Natural killer cell (primary cell): ENCODE measurements at regions of chr9 and their contacts with region 1.

Region 1: DNA sequence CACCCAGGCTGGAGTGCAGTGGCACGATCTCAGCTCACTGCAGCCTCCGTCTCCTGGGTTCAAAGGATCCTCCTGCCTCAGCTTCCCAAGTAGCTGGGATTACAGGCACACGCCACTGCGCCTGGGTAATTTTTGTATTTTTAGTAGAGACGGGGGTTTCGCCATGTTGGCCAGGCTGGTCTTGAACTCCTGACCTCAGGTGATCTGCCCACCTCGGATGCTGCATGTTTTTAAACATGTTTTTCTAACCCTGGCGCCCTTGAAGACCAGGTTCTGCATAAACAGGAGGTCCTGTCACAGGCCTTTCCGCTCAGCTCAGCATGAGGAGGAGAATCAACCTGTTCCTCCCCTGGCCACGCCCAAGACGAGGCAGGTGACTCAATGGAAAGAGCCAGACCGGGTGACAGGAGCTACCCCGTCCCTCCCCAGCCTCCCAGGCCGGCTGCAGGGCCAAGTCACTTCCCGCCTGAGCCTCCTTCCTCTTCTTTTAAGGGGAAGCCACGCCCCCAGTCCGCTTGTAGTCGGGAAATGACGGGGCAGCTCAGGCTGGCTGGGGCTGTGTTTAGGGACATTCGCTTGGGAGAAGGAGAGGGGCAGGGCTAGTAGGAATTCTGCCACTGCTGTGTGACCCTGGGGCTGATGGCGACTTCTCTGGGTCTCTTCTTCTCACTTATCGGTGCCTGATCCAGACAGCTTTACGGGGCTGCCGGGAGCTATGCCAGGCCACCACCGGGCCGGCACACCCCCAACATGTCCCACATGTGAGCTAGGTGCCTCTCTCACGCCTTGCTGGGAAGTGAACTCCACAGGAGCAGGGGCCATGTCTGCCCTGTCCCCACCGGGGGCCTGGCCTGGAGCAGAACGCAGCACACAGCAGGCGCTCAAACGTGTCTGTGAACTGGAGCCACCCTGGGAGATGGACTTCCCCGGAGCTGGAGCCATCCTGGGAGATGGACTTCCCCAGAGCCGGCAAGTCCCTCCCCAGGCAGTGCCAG is 6.1 kb downstream of the NOTCH1 start:
- DNase-seq: peak; percentile 64 to 89
- ATAC-seq: peak; percentile 30 to 69 (median 50)
- H3K4me3 ChIP-seq: peak overlapping the region; percentile 9
- H3K4me3 Mint-ChIP-seq: peak overlapping the region; percentile 98
- H3K27ac ChIP-seq: peak overlapping the region; percentile 87
- H3K27ac Mint-ChIP-seq: peak overlapping the region; percentile 89 to 99
- H3K4me1 ChIP-seq: peaks cover 97% of the 10 kb centered on the region
- H3K4me1 Mint-ChIP-seq: peaks cover 49 to 53% of the 10 kb centered on the region in 2 donors
- H3K27me3 ChIP-seq: no peaks in the 10 kb centered on the region
- H3K27me3 Mint-ChIP-seq: no peaks in the 10 kb centered on the region
- CTCF ChIP-seq: no peak

Region 2: GRCh38 chr9:136558373-136558772 is 18.6 kb after region 1 on chr9:
- intact Hi-C with region 1: no loop called
- DNase-seq: no peak
- ATAC-seq: peak in 1 of 3 donors; percentile 68
- H3K4me3 ChIP-seq: no peak overlapping the region
- H3K4me3 Mint-ChIP-seq: peak overlapping the region; percentile 30
- H3K27ac ChIP-seq: peak overlapping the region; percentile 38
- H3K27ac Mint-ChIP-seq: peak overlapping the region; percentile 7 to 66
- H3K4me1 ChIP-seq: peaks cover 41% of the 10 kb centered on the region
- H3K4me1 Mint-ChIP-seq: peaks cover 8 to 15% of the 10 kb centered on the region in 2 donors
- H3K27me3 ChIP-seq: no peaks in the 10 kb centered on the region
- H3K27me3 Mint-ChIP-seq: no peaks in the 10 kb centered on the region
- CTCF ChIP-seq: no peak

Region 3: DNA sequence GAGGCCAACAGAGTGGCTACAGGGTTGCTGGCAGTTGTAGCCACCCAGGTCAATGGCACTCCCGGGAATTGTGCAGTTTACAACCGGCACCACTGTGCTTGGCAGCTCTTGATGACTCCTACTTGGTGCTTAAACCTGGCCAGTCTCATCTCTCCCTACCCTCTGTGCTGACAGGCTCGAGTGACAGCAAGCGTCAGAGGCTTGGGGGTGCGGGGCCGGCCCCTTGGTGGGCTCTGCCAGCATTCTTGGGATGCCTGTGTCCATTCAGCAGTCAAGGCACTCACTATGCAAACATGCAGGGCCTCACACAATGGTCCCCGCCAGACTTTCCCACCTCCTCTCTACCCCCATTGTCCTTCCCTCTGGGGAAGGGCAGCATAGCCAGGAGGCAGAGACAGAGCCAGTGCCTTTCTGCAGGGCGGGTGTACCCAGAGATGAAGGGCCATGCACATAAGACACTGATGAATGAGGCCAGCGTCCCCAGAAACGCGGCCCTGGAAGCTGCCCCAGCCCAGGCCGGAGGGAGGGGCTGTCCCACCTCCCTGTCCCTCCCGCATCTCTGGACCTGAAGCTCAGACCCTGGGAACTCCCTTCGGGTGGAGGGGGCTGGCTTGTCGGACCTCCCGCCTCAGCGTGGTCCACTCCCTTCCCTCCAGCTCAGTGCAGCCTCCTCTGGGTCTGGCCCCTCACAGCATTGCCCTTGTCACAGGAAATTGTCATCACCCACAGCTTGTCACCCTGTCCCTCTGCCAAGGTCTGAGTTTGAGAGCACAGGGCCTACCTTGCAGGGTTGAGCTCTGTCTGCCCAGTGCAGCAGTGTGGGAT is 32.5 kb after region 1 on chr9:
- intact Hi-C with region 1: loop called (anchors 5 kb)
- DNase-seq: peak; percentile 53 to 55
- ATAC-seq: peak; percentile 92 to 94 (median 94)
- H3K4me3 ChIP-seq: no peak overlapping the region
- H3K4me3 Mint-ChIP-seq: peak overlapping the region; percentile 72
- H3K27ac ChIP-seq: peak overlapping the region; percentile 73
- H3K27ac Mint-ChIP-seq: peak overlapping the region; percentile 90 to 93
- H3K4me1 ChIP-seq: peaks cover 97% of the 10 kb centered on the region
- H3K4me1 Mint-ChIP-seq: peaks cover 47 to 59% of the 10 kb centered on the region in 2 donors
- H3K27me3 ChIP-seq: no peaks in the 10 kb centered on the region
- H3K27me3 Mint-ChIP-seq: no peaks in the 10 kb centered on the region
- CTCF ChIP-seq: no peak

Region 4: DNA sequence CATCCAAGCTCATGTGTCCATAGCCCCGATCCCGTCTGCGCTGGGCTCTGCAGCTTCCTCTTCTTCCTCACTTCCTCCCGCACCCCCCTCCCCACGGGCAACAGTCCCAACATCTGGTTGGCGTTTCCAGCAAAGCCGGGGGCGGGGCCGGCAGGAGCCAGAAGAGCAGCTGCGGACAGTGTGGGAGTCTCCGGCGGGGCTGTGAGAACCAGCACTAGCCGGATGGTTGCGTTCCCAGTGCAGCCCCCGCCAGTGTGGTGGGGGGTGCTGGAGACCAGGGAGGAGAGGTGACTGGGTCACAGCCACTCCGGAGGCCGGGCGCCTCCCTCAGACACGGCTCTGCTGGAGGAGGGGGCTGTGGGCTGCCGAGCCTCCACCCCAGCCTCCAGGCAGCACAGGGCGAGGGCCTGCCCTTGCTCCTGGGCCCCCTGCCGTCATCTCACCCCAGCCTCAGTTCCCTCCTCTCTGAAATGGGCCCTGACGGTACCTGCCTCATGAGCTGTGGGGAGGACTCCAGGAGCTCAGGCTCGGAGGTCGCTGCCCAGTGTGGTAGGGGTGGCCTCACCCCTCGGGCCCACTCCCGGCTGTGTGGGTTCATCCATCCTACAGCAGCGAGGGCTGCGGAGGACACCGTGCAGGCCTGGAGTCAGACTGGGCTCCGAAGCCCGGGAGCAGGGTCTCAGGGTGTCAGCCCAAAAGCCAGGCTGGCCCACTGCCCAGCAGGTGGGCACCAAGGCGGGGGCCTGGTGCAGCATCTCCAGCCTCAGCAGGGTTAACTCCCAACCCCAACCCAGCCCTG is 47.6 kb after region 1 on chr9:
- intact Hi-C with region 1: no loop called
- DNase-seq: no peak
- ATAC-seq: no peak
- H3K4me3 ChIP-seq: no peak overlapping the region
- H3K4me3 Mint-ChIP-seq: no peak overlapping the region
- H3K27ac ChIP-seq: no peak overlapping the region
- H3K27ac Mint-ChIP-seq: no peak overlapping the region
- H3K4me1 ChIP-seq: peaks cover 29% of the 10 kb centered on the region
- H3K4me1 Mint-ChIP-seq: peaks cover 7 to 13% of the 10 kb centered on the region in 2 donors
- H3K27me3 ChIP-seq: no peaks in the 10 kb centered on the region
- H3K27me3 Mint-ChIP-seq: no peaks in the 10 kb centered on the region
- CTCF ChIP-seq: no peak

Region 5: DNA sequence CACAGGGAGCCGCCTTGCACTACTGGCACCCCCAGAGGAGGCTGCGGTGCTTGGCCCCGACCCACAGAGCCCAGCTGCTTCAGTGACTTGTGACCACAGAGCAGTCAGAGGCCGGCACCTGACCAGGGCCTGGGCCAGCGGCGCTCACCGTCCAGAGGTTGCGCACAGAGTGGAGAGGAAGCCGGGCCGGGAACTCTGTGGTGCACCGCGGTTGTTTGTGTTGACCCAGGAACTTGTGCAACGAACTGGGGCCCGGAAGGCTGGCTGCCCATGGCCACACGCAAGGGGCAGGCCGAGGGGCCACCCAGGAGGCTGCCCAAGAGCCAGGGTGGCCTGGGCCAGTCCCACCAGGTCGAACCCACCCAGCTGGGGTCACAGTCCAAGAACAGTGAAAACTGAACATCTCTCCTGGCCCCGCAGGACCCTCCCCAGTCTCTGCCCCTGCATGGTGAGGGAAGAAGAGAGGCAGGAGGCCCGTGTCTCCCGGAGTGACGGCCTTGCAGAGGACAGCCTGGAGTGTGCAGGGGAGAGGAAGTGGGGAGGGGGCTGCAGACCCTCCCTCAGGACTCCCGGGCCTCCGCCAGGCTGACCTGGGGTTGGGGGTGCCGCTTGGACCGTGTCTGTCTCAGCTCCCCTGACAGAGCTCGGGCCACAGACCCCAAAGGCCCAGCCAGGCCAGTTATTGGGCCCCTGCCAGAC is 80.2 kb after region 1 on chr9:
- intact Hi-C with region 1: loop called (anchors 5 kb)
- DNase-seq: peak; percentile 27 to 46
- ATAC-seq: peak; percentile 29 to 86 (median 59)
- H3K4me3 ChIP-seq: no peak overlapping the region
- H3K4me3 Mint-ChIP-seq: peak overlapping the region; percentile 84
- H3K27ac ChIP-seq: peak overlapping the region; percentile 87
- H3K27ac Mint-ChIP-seq: peak overlapping the region; percentile 87 to 89
- H3K4me1 ChIP-seq: peaks cover 86% of the 10 kb centered on the region
- H3K4me1 Mint-ChIP-seq: peaks cover 48 to 61% of the 10 kb centered on the region in 2 donors
- H3K27me3 ChIP-seq: no peaks in the 10 kb centered on the region
- H3K27me3 Mint-ChIP-seq: no peaks in the 10 kb centered on the region
- CTCF ChIP-seq: no peak

Region 6: DNA sequence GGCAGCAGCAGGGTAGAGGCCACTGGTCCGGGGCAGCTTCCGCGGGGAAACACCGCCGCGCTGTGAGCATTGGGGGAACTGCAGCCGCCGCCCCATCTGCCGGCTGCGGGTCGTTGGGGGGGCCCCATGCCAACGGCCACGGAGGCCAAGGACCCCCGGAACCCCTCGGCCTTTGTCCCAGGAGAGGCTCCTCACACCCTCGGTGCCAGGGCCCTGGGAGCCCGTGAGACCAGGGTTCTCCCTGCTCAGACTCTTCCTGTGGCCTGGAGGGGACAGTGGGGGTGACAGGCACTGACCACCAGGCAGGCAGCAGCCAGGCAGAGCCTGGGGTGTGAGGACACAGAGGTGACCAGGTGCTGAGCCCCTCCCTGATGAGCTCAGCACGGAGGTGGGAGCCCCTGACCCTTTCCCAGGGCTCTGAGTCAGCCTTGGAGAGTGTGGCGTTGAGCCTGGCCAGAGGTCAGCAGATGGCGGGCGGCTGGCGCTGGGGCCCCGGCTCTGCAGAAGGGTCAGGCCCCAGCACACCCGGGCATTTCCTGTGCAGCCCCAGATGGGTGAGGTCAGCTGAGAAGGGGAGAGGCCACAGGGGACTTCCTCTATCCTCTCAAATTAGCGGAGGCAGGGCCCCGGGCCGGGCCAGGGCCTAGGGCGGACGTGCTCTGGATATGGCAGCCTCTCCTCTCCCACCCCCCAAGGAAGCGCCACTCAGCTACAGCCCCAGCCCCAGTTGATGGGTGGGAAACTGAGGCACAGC is 105.1 kb after region 1 on chr9:
- intact Hi-C with region 1: no loop called
- DNase-seq: peak; percentile 72 to 81
- ATAC-seq: peak; percentile 92 to 98 (median 96)
- H3K4me3 ChIP-seq: no peak overlapping the region
- H3K4me3 Mint-ChIP-seq: no peak overlapping the region
- H3K27ac ChIP-seq: no peak overlapping the region
- H3K27ac Mint-ChIP-seq: no peak overlapping the region
- H3K4me1 ChIP-seq: peaks cover 36% of the 10 kb centered on the region
- H3K4me1 Mint-ChIP-seq: no peaks in the 10 kb centered on the region
- H3K27me3 ChIP-seq: peaks cover 36% of the 10 kb centered on the region
- H3K27me3 Mint-ChIP-seq: peaks cover 15 to 17% of the 10 kb centered on the region in 2 donors
- CTCF ChIP-seq: peak; percentile 90